HEK293T (cell line): ENCODE measurements at regions of chr10 and their contacts with region 1.

Region 1: DNA sequence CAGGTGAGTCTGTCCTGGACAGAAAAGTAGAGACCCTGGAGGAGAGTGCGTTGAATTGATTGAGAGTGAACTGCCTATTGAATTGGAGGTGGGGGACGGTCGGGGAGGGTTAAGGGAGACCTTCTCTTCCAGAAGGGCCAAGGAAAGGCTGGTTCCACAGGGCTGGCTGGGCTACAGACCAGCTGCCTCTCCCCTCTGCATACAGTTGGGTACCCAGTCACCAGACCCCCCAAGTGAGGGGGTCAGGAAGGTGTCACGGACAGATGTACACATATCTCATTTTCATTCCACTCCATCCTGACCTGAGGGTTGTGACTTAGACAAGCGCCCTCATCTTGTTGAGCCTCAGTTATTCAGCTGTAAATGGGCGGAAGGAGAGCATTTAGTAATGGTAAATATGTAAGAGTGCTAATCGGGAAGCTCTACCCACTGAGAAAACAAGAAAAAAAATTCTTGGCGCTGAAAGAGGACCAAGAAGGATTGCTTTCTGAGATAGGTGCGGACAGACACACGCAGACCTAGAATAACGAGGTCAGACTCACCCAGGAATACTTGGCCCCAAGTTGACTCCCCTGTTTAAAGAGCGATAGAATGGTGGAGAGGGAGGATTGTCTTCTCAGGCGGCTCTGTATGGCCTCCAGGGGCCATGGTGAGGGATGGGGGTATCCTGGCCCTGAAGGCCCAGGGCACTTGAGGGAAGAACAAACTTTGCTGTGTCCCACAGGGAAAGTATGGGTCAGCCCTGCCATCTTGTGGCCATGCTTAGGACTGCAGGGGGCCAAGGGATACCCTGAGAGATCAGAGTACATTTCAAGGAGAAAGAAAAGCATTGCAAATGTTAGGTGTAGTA is 7.2 kb upstream of the MBL2 start:
- DNase-seq: peak; percentile 90

Region 2: DNA sequence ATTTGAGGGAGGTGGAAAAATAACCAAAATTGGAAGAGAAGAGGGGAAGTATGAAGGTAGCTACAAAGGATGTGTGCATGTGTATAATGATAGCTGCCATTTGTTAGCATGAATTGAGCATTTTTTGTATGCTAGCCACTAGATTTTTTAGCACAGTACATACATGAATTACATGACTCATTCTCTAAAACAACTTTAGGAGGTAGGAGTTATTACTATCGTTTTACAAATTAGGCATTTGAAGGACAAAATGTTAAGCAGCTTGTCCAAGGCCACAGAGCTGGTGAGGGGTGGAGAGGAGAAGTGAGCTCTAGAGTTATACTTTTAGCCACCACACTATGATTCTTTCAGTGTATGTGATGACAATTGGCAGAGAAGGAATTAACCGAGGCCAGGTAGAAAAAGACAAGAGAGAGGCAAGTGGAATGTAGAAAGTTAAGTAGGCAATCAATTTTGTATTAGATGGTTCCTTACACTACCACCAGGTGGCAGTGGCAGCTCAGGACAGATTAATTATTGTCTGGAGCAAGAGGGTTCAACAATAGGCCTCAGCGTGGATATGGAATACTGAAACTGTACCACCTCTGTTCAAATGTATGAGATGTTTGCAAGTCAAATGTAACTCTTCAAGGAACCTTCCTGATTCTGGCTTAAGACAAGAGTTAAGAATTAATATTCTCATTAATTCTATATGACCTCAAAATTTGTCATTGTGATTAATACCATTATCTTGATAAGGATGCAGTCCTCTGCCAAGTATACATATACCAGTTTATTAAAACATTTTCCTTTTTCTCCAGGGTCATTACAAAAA is 135.2 kb before region 1 on chr10:
- CTCF ChIA-PET with region 1: interaction called, 34 read pairs
- POLR2A ChIA-PET with region 1: no interaction called
- DNase-seq: peak; percentile 62

Region 3: GRCh38 chr10:52740913-52741675 is 38.7 kb before region 1 on chr10:
- CTCF ChIA-PET with region 1: interaction called, 29 read pairs
- POLR2A ChIA-PET with region 1: interaction called, 3 read pairs
- DNase-seq: peak; percentile 85

Region 4: GRCh38 chr10:52746169-52746568 is 33.6 kb before region 1 on chr10:
- CTCF ChIA-PET with region 1: interaction called, 29 read pairs
- POLR2A ChIA-PET with region 1: no interaction called
- DNase-seq: no peak

Region 5: DNA sequence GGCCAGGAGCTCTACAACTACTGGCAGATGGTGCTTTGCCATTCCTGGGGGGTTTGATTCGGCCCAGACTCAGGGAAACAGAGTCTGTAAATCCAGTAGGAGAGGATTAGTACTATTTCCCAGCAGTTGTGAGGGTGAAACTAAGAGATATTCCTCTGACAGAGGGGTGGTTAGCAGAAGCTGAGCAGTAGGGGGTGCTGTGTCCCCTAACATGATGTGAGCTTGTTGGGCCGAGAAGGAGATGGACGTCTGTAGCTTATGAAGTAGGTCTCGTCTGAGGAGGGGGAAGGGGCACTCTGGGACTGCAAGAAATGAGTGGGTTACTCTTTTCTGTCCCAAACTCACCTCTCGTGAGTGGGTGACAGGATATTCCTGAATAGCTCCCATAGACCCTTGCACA is 172.1 kb after region 1 on chr10:
- CTCF ChIA-PET with region 1: no interaction called
- POLR2A ChIA-PET with region 1: no interaction called
- DNase-seq: peak; percentile 54